CD4-positive, alpha-beta T cell (primary cell): ENCODE measurements at regions of chr1 and their contacts with region 1.

Region 1: DNA sequence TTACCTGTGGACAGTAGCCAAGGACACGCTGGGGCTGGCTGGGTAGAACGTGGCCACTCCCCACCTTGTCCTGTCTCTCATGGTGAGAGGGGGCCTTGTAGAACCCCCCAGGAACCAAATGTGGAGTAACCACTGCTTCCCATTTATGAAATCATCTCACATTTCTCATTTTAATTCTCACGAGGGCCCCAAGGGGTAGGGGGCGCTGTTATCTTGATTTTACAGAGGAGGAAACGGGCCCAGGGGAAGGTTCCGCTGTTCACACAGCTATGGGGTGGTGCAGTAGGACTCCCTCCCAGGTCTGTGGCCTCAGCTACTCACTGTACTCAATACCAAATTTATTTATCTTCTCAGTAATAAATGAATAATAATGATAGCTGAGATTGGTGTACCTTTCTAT is 5.5 kb downstream of the SMPDL3B start:
- DNase-seq: peak; percentile 63 to 90 (median 74)
- ATAC-seq: peak; percentile 90
- H3K4me3 ChIP-seq: no peak overlapping the region
- H3K4me3 Mint-ChIP-seq: no peak overlapping the region
- H3K27ac ChIP-seq: peak overlapping the region in 1 of 2 donors; percentile 20
- H3K27ac Mint-ChIP-seq: peak overlapping the region; percentile 38
- H3K4me1 ChIP-seq: peaks cover 45% of the 10 kb centered on the region
- H3K4me1 Mint-ChIP-seq: peaks cover 29% of the 10 kb centered on the region
- H3K27me3 ChIP-seq: peaks cover 0 to under 1% of the 10 kb centered on the region in 2 experiments
- H3K27me3 Mint-ChIP-seq: peaks cover 6% of the 10 kb centered on the region
- CTCF ChIP-seq: peak; percentile 79

Region 2: DNA sequence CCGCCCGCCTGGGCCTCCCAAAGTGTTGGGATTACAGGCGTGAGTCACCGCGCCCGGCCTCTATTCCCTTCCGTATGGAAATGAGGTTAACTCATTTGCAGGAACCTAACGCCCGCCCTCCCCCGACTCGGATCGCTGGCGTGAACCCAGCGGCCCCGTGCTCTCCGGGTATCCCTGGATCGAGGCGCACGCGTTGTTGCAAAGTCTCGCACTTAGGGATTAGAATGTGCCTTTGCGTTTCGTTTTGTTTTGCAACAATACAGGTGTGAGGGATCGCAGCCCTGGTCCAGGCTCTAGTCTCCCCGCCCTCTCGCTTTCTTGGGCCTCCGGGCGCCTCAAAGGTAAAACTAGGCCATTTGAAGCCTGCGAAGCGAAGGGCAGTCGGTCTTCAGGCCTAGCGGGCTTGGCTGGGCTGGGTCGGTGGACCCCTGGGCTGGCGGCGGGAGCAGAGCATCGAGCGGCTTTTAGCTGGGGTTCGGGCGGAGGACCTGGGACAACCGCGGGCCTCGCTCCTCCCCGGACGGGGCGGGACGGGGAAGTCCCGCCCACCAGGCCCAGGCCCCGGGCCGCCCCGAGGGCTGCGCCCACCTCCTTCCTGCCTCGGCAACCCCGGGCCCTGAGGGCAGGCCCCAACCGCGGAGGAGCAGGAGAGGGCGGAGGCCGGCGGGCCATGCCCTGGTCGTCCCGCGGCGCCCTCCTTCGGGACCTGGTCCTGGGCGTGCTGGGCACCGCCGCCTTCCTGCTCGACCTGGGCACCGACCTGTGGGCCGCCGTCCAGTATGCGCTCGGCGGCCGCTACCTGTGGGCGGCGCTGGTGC is 19.3 kb after region 1 on chr1 and contains the start of gene XKR8:
- CTCF ChIA-PET with region 1: interaction called, 10 read pairs
- POLR2A ChIA-PET with region 1: interaction called, 8 read pairs
- intact Hi-C with region 1: no loop called
- DNase-seq: peak; percentile 72 to 93 (median 84)
- ATAC-seq: peak; percentile 99
- H3K4me3 ChIP-seq: peak within 1 kb of the TSS; percentile 94
- H3K4me3 Mint-ChIP-seq: peak within 1 kb of the TSS; percentile 81
- H3K27ac ChIP-seq: peak within 1 kb of the TSS; percentile 67 to 79
- H3K27ac Mint-ChIP-seq: peak within 1 kb of the TSS; percentile 80
- H3K4me1 ChIP-seq: peaks cover 36% of the 10 kb centered on the region
- H3K4me1 Mint-ChIP-seq: peaks cover 16% of the 10 kb centered on the region
- H3K27me3 ChIP-seq: no peaks in the 10 kb centered on the region
- H3K27me3 Mint-ChIP-seq: no peaks in the 10 kb centered on the region
- CTCF ChIP-seq: no peak
- total RNA-seq, gene XKR8: 5.4 to 5.5 TPM

Region 3: GRCh38 chr1:27979151-27979858 is 39.0 kb after region 1 on chr1:
- CTCF ChIA-PET with region 1: interaction called, 8 read pairs
- POLR2A ChIA-PET with region 1: no interaction called
- intact Hi-C with region 1: loop called (anchors 1 kb)
- DNase-seq: peak in 4 of 14 experiments; percentile 17 to 75 (median 72)
- ATAC-seq: peak; percentile 72
- H3K4me3 ChIP-seq: no peak overlapping the region
- H3K4me3 Mint-ChIP-seq: no peak overlapping the region
- H3K27ac ChIP-seq: no peak overlapping the region
- H3K27ac Mint-ChIP-seq: no peak overlapping the region
- H3K4me1 ChIP-seq: no peaks in the 10 kb centered on the region
- H3K4me1 Mint-ChIP-seq: no peaks in the 10 kb centered on the region
- H3K27me3 ChIP-seq: no peaks in the 10 kb centered on the region
- H3K27me3 Mint-ChIP-seq: no peaks in the 10 kb centered on the region
- CTCF ChIP-seq: peak; percentile 73

Region 4: GRCh38 chr1:28104866-28105467 is 164.7 kb after region 1 on chr1:
- CTCF ChIA-PET with region 1: no interaction called
- POLR2A ChIA-PET with region 1: no interaction called
- intact Hi-C with region 1: no loop called
- DNase-seq: no peak
- ATAC-seq: no peak
- H3K4me3 ChIP-seq: no peak overlapping the region
- H3K4me3 Mint-ChIP-seq: no peak overlapping the region
- H3K27ac ChIP-seq: no peak overlapping the region
- H3K27ac Mint-ChIP-seq: no peak overlapping the region
- H3K4me1 ChIP-seq: no peaks in the 10 kb centered on the region
- H3K4me1 Mint-ChIP-seq: no peaks in the 10 kb centered on the region
- H3K27me3 ChIP-seq: no peaks in the 10 kb centered on the region
- H3K27me3 Mint-ChIP-seq: no peaks in the 10 kb centered on the region
- CTCF ChIP-seq: no peak

Region 5: DNA sequence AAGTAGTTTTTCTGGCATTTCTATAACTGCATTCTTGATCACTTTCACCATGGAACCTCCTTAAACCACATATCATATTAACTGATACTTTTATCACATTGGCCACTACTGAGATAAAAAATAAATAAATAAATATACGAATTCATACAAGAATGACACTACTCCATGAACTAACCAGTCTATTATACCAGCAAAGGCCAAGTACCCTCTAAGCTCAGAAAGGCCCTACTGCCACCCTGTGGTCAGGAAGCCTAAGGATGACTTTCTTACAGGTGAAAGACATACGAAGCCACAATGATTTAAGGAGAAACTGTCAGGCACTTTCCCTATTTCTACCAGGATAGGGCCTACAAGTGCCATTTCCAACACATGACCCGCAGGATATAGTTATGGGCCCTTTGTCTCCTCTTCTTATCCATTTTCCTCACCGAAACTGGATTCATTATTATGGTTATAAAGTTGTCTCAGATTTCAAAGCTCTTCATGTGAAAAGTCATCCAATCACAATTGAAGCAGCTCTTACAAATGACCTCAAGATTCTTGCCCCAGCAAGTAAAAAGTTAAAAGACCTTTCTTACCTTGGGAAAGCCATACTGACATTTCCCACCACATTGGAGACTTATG is 268.6 kb after region 1 on chr1:
- CTCF ChIA-PET with region 1: no interaction called
- POLR2A ChIA-PET with region 1: interaction called, 4 read pairs
- intact Hi-C with region 1: loop called (anchors 1 to 5 kb)
- DNase-seq: peak; percentile 38 to 81 (median 54)
- ATAC-seq: peak; percentile 86
- H3K4me3 ChIP-seq: no peak overlapping the region
- H3K4me3 Mint-ChIP-seq: no peak overlapping the region
- H3K27ac ChIP-seq: no peak overlapping the region
- H3K27ac Mint-ChIP-seq: no peak overlapping the region
- H3K4me1 ChIP-seq: no peaks in the 10 kb centered on the region
- H3K4me1 Mint-ChIP-seq: peaks cover 7% of the 10 kb centered on the region
- H3K27me3 ChIP-seq: no peaks in the 10 kb centered on the region
- H3K27me3 Mint-ChIP-seq: no peaks in the 10 kb centered on the region
- CTCF ChIP-seq: peak; percentile 68